ENCODE measurements at regions of chr10 and their contacts with region 1.

Region 1: DNA sequence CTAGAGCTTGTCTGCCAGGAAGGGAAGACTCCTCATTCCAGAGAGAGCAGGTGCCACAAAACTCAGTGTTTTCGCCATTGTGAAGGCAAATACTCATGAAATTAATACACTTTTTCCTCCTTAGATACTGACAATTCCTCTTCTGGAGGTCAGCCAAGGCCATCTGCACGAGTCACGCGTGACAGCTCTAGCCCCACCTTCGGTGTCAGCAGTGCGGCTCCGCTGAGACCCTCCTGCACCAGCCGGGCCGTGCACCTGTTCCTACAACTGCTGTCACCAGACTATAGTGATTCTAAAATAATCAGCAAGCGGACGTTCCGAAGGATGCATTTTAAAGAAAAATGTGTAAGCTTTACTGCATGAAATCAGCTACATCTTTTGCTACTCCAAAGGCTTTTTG is 127.7 kb downstream of the DIP2C start:
- DNase-seq: no peak
- ATAC-seq: no peak

Region 2: DNA sequence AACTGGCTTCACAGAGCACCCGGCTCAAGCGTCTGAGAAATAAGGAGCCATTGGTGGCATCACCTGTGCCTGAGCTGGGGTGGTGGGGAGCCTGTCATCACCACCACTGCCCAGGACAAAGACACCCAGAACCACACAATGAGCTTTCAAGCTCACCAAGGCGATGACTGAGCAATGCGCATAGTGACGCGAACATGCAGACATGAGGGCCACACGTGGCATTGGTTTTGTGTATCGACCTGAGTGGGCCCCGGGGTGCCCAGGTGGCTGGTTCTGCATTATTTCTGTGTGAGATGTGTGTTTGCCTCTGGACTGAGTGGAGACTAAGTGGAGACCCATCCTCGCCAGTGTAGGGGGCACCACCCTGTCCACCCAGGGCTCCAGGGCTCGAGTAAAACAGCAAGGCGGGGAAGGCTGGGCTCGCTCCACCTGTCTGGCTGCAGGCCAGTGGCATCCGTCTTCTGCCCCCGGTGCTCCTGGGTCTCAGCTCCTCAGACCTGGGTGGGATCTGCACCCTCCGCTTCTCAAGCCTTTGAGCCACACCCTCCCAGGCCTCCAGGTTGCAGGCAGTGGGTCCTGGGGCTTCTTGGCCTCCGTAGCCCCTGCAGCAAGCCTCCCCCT is 35.1 kb after region 1 on chr10:
- intact Hi-C with region 1: loop called (anchors 1 kb)
- DNase-seq: no peak
- ATAC-seq: no peak

Measured in sciatic nerve (tissue), 2 donors.